AG04449 (cell line): ENCODE measurements at regions of chr16 and their contacts with region 1.

Region 1: GRCh38 chr16:56608043-56608875 is at the start of gene MT2A:
- DNase-seq: peak; percentile 65
- H3K4me3 ChIP-seq: peak within 1 kb of the TSS; percentile 74
- CTCF ChIP-seq: no peak

Region 2: GRCh38 chr16:56460101-56460500 is 148.2 kb before region 1 on chr16:
- CTCF ChIA-PET with region 1: no interaction called
- POLR2A ChIA-PET with region 1: no interaction called
- DNase-seq: no peak
- H3K4me3 ChIP-seq: no peak overlapping the region
- CTCF ChIP-seq: no peak

Region 3: DNA sequence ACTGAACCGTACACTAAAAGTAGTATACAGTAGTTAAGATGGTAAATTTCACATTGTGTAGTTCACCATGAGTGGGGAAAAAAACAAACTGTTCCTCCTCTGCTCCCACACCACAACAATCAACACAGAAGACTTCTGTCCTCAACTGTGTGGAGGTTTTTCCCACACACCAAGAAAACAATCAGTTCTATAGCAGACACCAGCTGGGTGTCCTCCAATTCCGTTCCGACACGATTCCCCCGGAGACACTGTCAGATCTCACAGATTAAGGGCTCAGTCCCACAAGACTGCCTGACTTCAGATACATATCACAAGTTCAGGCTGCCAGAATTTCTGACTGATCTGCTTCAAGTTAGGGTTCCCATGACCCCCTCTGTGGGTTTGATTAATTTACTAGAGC is 120.2 kb before region 1 on chr16:
- CTCF ChIA-PET with region 1: no interaction called
- POLR2A ChIA-PET with region 1: no interaction called
- DNase-seq: no peak
- H3K4me3 ChIP-seq: no peak overlapping the region
- CTCF ChIP-seq: no peak

Region 4: DNA sequence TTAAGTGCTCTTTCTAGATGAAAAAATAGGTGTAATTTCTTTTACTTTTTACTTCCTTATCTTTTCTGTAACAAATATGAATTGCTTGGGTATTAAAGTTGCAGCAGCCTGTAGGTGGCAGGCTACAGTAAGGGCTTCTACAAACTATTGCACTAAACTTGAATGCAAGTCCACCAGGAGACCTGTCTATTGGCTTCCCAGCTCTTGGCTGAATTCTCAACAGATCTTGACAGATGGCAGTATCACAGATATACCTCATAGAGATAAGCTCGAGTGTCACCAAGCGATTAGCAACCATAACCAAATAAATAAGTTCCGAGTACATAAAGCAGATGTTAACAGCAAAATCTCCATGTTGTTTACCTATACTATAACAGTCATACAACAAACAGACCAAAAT is 94.3 kb before region 1 on chr16:
- CTCF ChIA-PET with region 1: interaction called, 74 read pairs
- POLR2A ChIA-PET with region 1: no interaction called
- DNase-seq: peak; percentile 16
- H3K4me3 ChIP-seq: no peak overlapping the region
- CTCF ChIP-seq: peak; percentile 58

Region 5: GRCh38 chr16:56519459-56520250 is 88.6 kb before region 1 on chr16 and contains the start of gene BBS2:
- CTCF ChIA-PET with region 1: interaction called, 74 read pairs
- POLR2A ChIA-PET with region 1: no interaction called
- DNase-seq: no peak
- H3K4me3 ChIP-seq: peak within 1 kb of the TSS; percentile 92
- CTCF ChIP-seq: no peak

Region 6: DNA sequence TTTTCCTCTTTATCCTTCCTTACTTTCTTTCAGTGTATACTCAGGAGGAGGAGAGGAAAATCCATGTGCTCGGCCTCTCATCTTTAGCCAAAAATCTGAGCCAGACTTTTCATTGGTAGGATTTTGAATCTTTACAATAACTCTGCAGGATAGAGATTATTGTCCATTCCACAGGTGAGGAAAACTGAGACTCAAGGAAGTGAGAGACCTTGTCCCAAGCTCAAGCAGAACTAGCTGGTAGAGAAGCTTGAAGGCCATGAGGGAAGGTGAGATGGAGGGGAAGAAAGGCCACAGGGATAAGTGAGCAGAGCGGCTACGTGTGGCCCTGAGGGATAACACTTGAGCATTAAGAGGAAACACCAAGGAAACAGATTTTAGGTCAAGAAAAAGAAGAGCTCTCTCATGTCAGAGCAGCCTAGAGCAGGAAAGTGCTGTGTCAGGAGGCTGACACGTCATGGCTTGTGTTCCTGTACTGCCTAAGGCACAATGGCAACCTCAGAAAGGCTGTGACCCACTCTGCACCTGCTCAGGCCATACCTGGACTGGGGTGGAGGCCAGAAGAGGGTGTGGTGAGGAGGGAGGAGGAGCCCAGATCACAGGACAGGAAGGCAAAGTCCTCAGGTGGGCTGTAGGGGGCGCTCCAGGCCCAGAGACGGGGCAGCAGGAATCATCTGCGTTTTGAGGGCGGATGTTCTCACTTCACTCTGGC is 31.5 kb before region 1 on chr16:
- CTCF ChIA-PET with region 1: interaction called, 40 read pairs
- POLR2A ChIA-PET with region 1: no interaction called
- DNase-seq: no peak
- H3K4me3 ChIP-seq: no peak overlapping the region
- CTCF ChIP-seq: peak; percentile 76

Region 7: DNA sequence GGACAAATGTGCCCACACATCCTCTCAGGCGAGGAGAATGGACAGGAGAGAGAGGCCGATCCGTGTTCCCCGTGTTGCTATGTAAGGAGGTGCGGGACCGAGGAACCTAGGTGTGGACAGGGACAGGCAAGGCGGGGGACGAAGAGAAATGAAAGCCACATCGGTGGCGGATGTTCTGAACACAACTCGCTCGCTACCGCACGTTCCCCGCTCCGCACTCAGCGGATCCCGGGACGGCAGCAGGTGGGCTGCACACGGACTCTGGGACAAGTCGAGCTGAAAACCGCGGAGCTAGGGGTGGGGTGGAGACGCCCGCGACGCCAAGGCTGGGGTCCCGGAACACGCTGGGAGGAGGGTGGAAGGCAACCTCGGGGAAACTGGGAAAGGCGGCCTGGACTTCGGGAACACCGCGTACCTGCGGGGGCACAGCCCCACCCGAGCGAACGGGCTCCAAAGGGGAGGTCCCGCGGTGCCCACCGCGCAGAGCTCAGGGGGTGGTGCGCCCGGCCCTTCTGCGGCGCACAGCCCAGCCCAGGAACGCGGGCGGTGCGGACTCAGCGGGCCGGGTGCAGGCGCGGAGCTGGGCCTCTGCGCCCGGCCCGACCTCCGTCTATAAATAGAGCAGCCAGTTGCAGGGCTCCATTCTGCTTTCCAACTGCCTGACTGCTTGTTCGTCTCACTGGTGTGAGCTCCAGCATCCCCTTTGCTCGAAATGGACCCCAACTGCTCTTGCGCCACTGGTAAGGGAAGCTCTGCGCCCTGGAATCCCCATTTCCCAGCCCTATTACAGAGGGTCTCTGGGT is 17.1 kb after region 1 on chr16 and contains the start of gene MT1E:
- CTCF ChIA-PET with region 1: interaction called, 11 read pairs
- POLR2A ChIA-PET with region 1: interaction called, 263 read pairs
- DNase-seq: no peak
- H3K4me3 ChIP-seq: peak within 1 kb of the TSS; percentile 84
- CTCF ChIP-seq: no peak